ENCODE measurements at regions of chr2 and their contacts with region 1.

Region 1: GRCh38 chr2:60881047-60881932 is at the start of gene REL:
- DNase-seq: peak; percentile 87 to 90
- H3K4me3 ChIP-seq: peak within 1 kb of the TSS; percentile 80 to 97
- H3K27ac ChIP-seq: peak within 1 kb of the TSS; percentile 95 to 99
- H3K4me1 ChIP-seq: peaks cover 0 to 11% of the 10 kb centered on the region in 2 donors
- H3K27me3 ChIP-seq: no peaks in the 10 kb centered on the region
- CTCF ChIP-seq: no peak
- POLR2A ChIP-seq: peak; percentile 90 to 93
- total RNA-seq, gene REL: 1.8 to 21.0 (median 12.2) TPM

Region 2: DNA sequence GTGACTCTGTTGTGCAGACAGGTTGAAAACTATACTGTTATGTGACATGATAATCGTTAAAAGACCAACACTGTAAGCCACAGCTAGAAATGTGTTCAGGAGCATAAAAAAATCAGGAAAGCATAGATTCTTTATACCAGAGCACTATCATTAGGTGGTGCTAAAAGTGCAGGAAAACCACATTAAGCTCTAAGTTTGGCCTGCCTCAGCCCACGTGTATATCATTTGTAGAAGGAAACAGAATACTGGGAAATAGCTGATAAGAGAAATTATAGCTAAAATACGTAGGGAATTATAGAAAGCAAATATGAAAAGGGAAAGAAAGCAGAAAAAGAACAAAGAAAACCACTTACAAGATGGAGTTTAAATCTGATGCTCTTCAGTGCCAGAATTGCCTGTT is 254.2 kb after region 1 on chr2:
- intact Hi-C with region 1: no loop called
- DNase-seq: no peak
- H3K4me3 ChIP-seq: no peak overlapping the region
- H3K27ac ChIP-seq: no peak overlapping the region
- H3K4me1 ChIP-seq: no peaks in the 10 kb centered on the region
- H3K27me3 ChIP-seq: no peaks in the 10 kb centered on the region
- CTCF ChIP-seq: peak; percentile 31 to 40 (median 34)
- POLR2A ChIP-seq: no peak

Region 3: DNA sequence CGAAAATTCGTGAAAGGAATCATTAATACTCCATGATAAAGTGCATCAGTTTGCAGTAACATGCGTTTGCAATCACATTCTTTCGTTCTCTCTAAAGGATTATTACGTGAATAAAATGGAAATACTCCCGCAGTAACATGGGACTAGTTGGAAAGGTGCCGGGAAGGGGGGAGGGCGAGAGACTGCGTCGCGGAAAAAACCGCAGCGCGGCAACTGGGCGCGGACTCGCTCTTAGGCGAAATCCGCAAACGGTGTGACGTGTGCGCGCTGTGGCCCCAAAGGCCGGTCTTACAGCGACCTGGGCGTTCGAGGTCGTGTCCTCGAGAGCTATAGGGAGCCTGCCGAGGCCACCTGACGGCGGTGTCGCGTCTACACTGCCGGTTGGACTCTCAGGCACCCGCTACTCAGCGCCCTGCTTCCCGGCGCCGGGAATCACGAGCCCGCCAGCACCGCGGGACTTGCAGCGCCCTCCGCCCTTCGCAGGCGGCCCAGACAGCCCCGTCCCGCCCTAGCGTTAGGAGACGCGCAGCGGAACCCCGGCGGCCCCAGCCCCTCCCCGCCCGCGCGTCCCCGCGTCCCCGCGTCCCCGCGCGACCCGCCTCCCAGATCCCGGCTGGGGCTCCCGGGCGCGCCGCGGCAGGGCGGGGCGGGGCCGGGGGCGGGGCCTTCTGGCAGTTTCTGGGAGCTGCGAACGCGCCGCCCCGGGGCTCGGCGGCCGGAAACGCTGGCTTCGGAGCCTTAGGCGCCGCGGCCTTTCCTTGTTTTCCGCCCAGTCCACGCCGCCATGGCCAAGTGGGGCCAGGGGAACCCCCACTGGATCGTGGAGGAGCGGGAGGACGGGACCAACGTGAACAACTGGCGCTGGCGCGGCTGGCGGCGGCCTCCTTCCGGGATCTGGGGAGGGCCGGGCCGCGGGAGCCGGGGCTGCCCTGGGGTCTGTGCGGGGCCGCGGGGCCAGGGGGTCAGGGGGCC is 295.8 kb after region 1 on chr2:
- intact Hi-C with region 1: loop called (anchors 10 kb)
- DNase-seq: peak; percentile 91 to 95
- H3K4me3 ChIP-seq: peak overlapping the region; percentile 61 to 68
- H3K27ac ChIP-seq: peak overlapping the region; percentile 93 to 99
- H3K4me1 ChIP-seq: peaks cover 8 to 19% of the 10 kb centered on the region in 2 donors
- H3K27me3 ChIP-seq: no peaks in the 10 kb centered on the region
- CTCF ChIP-seq: peak in 1 of 4 experiments; percentile 24
- POLR2A ChIP-seq: peak; percentile 81 to 87